GM10248 (cell line): ENCODE measurements at regions of chr2 and their contacts with region 1.

Region 1: GRCh38 chr2:96305091-96305978 is at the start of gene SNRNP200:
- DNase-seq: peak; percentile 92
- CTCF ChIP-seq: no peak

Region 2: DNA sequence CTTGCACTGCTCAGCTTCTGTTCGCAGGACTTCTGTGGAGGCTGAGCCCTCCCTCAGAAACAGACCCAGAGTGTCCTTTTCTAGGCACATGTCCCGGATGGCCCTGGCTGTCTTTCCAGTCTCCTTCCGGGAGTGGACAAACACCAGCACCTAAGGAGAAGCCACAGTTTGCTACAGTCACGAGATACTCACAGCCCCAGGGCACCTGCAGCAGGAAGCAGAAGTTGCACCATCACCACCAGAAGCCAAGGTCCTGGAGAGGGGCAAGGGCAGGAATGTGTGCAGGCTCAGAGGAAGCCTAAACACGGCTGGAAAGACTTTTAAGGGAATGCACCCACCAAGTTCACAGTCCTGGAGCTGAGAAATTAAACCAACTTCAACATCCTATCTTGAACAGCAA is 13.6 kb before region 1 on chr2:
- CTCF ChIA-PET with region 1: interaction called, 10 read pairs
- POLR2A ChIA-PET with region 1: no interaction called
- DNase-seq: no peak
- CTCF ChIP-seq: no peak

Region 3: GRCh38 chr2:96407041-96407918 is 101.9 kb after region 1 on chr2:
- CTCF ChIA-PET with region 1: no interaction called
- POLR2A ChIA-PET with region 1: no interaction called
- DNase-seq: peak; percentile 85
- CTCF ChIP-seq: peak; percentile 86